Endothelial cell of umbilical vein (primary cell): ENCODE measurements at regions of chr4 and their contacts with region 1.

Region 1: GRCh38 chr4:151099229-151099975 is at the start of gene RPS3A:
- DNase-seq: peak; percentile 99
- H3K4me3 ChIP-seq: peak within 1 kb of the TSS; percentile 46 to 89 (median 78)
- H3K27ac ChIP-seq: peak within 1 kb of the TSS; percentile 69
- H3K4me1 ChIP-seq: peaks cover 17% of the 10 kb centered on the region
- H3K27me3 ChIP-seq: no peaks in the 10 kb centered on the region
- CTCF ChIP-seq: peak; percentile 94 to 96
- POLR2A ChIP-seq: peak; percentile 98
- total RNA-seq, gene RPS3A: 1,468 and 1,494 TPM in 2 replicates

Region 2: GRCh38 chr4:151418385-151418784 is 319.0 kb after region 1 on chr4:
- CTCF ChIA-PET with region 1: no interaction called
- POLR2A ChIA-PET with region 1: no interaction called
- dilution Hi-C with region 1: no loop called
- intact Hi-C with region 1: loop called (anchors 5 kb)
- DNase-seq: peak; percentile 91
- H3K4me3 ChIP-seq: no peak overlapping the region
- H3K27ac ChIP-seq: peak overlapping the region; percentile 89
- H3K4me1 ChIP-seq: peaks cover 43% of the 10 kb centered on the region
- H3K27me3 ChIP-seq: no peaks in the 10 kb centered on the region
- CTCF ChIP-seq: no peak
- POLR2A ChIP-seq: peak; percentile 35

Region 3: DNA sequence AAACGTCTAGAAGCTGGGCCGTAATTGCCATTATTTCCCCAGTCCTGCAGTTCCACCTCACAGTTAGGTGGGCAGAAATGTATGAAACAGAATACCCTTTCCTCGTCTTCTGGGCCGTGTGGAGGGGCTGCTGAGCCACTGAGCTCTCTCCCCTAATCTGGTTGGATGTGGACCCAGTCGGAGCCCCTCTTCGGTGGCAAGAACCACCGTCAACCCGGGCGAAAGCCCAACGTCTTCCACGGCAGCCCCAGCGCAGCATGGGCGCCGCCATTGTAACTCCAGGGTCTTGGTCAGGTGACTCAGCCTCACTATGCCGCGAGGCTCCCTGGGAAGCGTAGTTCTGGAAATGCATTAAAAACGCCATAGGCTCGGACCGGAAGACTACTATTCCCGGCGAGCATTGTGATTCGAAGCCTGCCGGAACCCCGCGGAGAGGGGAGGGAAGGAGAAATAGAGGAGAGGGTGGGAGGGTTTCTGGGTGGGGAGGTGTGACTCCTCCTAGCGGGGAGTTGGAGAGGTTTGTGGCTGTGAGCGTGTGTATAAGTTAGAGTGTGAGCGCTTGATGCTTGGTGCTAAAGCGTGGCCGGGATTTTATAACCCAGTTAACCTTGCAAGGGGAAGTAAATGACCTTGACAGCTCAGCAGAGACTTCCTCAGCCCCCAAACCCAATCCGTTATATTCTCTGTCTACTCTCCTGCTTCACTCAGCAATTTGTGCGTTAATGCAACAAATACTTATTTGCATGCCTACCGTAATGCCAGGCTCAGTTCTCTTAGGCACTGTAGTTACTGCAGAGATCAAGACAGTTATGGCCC is 661.5 kb after region 1 on chr4 and contains the start of gene GATB:
- CTCF ChIA-PET with region 1: no interaction called
- POLR2A ChIA-PET with region 1: no interaction called
- dilution Hi-C with region 1: no loop called
- intact Hi-C with region 1: loop called (anchors 2 kb)
- DNase-seq: peak; percentile 98
- H3K4me3 ChIP-seq: peak within 1 kb of the TSS; percentile 59 to 95 (median 78)
- H3K27ac ChIP-seq: peak within 1 kb of the TSS; percentile 63
- H3K4me1 ChIP-seq: peaks cover 10% of the 10 kb centered on the region
- H3K27me3 ChIP-seq: peaks cover 0 to 3% of the 10 kb centered on the region in 2 experiments
- CTCF ChIP-seq: peak in 1 of 2 donors; percentile 72
- POLR2A ChIP-seq: peak; percentile 79
- total RNA-seq, gene GATB: 17.7 and 20.7 TPM in 2 replicates